ENCODE measurements at regions of chr1 and their contacts with region 1.

Region 1: DNA sequence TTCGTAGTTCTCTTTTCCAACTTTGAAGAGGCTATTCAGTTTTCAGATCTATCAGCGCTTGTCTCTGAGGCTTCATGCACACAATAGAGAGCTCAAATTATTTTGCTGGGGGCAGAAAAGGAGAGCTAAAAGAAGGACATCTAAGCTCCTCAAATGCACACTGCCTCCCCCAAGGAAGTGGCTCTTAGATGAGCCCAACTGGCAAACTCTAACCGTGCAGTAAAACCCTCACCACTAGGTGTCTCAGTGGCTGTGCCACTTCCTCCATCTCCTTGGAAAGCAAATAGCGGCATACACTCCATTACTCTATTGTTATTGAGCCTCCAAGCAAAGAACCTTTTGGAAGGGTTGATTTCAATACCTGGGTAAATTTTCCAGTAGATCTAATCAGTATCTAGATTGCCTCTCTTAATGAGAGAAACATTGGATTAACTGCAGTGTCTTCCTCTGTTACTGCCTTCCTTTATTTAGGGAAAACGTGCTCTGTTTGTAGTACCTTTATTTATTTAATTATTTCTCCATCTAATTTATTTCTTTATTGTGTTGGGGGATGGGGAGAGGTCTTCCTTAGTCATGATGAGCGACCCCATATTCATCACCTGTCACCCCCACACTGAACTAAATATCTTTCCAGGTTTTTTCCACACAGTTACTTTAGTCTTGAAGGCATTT is 9.2 kb upstream of the SFPQ start:
- DNase-seq: peak; percentile 81
- ATAC-seq: peak; percentile 100
- H3K4me3 ChIP-seq: no peak overlapping the region
- H3K4me3 Mint-ChIP-seq: no peak overlapping the region
- H3K27ac ChIP-seq: no peak overlapping the region
- H3K27ac Mint-ChIP-seq: no peak overlapping the region
- H3K4me1 ChIP-seq: peaks cover 3 to 5% of the 10 kb centered on the region in 2 donors
- H3K4me1 Mint-ChIP-seq: peaks cover 7% of the 10 kb centered on the region
- H3K27me3 ChIP-seq: peaks cover 0 to 2% (median 0%) of the 10 kb centered on the region in 4 experiments
- H3K27me3 Mint-ChIP-seq: peaks cover 4% of the 10 kb centered on the region
- CTCF ChIP-seq: peak; percentile 93

Region 2: GRCh38 chr1:34885405-34886247 is 316.6 kb before region 1 on chr1:
- CTCF ChIA-PET with region 1: no interaction called
- POLR2A ChIA-PET with region 1: no interaction called
- intact Hi-C with region 1: no loop called
- DNase-seq: peak; percentile 45
- ATAC-seq: peak; percentile 87
- H3K4me3 ChIP-seq: peak overlapping the region in 4 of 5 experiments; percentile 38 to 54 (median 50)
- H3K4me3 Mint-ChIP-seq: peak overlapping the region; percentile 77
- H3K27ac ChIP-seq: no peak overlapping the region
- H3K27ac Mint-ChIP-seq: no peak overlapping the region
- H3K4me1 ChIP-seq: peaks cover 12 to 13% of the 10 kb centered on the region in 2 donors
- H3K4me1 Mint-ChIP-seq: peaks cover 4% of the 10 kb centered on the region
- H3K27me3 ChIP-seq: peaks cover 0 to 28% (median 6%) of the 10 kb centered on the region in 4 experiments
- H3K27me3 Mint-ChIP-seq: peaks cover 23% of the 10 kb centered on the region
- CTCF ChIP-seq: no peak

Region 3: DNA sequence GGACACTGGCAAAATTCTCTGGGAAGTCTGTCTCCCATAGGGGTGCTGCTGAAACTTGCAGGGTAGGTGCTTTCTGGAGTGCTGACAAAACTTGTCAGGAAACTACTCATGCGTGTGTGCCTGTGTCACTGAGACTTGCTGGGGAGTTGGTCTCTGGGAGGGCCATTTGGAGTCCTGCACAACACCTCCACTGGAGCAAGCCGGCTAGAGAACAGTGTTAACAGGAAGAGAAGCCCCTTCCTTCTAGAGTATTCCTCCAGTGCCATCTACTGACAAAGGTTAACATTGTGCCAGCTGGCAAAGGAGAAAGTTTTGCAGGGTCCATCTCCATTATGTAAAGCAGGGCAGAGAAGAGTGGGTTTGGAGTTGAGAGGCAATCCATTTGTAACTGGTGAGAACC is 96.3 kb after region 1 on chr1:
- CTCF ChIA-PET with region 1: interaction called, 30 read pairs
- POLR2A ChIA-PET with region 1: interaction called, 5 read pairs
- intact Hi-C with region 1: loop called (anchors 1 kb)
- DNase-seq: peak; percentile 61
- ATAC-seq: peak; percentile 64
- H3K4me3 ChIP-seq: no peak overlapping the region
- H3K4me3 Mint-ChIP-seq: no peak overlapping the region
- H3K27ac ChIP-seq: no peak overlapping the region
- H3K27ac Mint-ChIP-seq: peak overlapping the region; percentile 10
- H3K4me1 ChIP-seq: peaks cover 3 to 4% of the 10 kb centered on the region in 2 donors
- H3K4me1 Mint-ChIP-seq: peaks cover 5% of the 10 kb centered on the region
- H3K27me3 ChIP-seq: no peaks in the 10 kb centered on the region
- H3K27me3 Mint-ChIP-seq: no peaks in the 10 kb centered on the region
- CTCF ChIP-seq: peak; percentile 66

Measured in B cell (primary cell).